Mammary epithelial cell (primary cell): ENCODE measurements at regions of chr2 and their contacts with region 1.

Region 1: DNA sequence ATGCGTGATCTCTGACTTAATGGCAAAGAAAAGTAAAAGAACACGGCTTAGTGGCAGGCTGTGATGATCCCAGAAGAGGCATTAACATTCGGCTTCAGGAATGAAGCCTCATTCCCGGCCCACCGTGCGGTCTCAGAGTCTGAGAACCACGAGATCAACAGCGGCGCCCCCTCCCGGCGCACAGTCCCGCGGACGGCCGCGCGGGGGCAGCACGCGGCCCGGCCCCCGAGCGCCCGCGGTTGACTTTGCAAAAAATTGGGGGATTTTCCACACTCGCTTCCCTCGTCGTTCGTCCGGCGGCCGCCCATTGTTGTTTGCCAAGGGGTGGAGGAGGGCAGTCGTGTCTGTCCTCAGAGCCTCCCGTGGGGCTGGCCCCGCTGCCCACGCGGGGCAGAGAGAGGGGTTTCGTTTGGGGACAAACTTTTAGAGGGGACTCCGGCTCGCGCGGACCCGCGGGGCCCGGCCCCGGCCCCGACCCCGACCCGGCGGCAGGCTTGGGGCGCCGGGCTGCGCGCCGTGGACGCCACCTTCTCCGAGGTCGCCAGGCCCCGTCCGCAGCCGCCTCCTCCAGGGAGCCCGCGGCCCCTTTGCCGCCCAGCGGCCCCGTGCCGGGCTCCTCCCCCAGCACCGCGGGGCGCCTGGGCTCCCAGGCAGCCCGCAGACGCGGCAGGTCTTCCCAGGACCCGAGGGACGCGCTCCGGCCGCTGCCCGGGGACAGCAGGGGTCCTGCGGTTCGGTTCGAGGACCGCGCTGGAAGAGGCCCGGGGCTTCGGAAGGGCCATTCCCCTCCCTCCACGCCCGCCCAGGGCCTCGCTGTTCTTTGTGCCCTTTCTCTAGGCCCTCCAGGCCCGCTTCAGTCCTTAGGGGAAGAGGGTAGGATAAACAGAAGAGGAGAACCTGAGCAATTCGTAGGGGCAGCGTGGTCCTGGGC is 3.4 kb upstream of the HS6ST1 start:
- DNase-seq: peak; percentile 67
- H3K4me3 ChIP-seq: peak overlapping the region; percentile 47 to 69 (median 50)
- H3K27ac ChIP-seq: peak overlapping the region; percentile 44
- H3K4me1 ChIP-seq: peaks cover 13% of the 10 kb centered on the region
- H3K27me3 ChIP-seq: no peaks in the 10 kb centered on the region
- CTCF ChIP-seq: peak; percentile 63 to 78

Region 2: GRCh38 chr2:128178650-128179460 is 143.2 kb before region 1 on chr2:
- CTCF ChIA-PET with region 1: no interaction called
- dilution Hi-C with region 1: no loop called
- in situ Hi-C with region 1: loop called in 1 of 2 experiments (anchors 25 kb)
- intact Hi-C with region 1: no loop called
- DNase-seq: peak; percentile 35
- H3K4me3 ChIP-seq: no peak overlapping the region
- H3K27ac ChIP-seq: no peak overlapping the region
- H3K4me1 ChIP-seq: no peaks in the 10 kb centered on the region
- H3K27me3 ChIP-seq: no peaks in the 10 kb centered on the region
- CTCF ChIP-seq: peak; percentile 86 to 91

Region 3: DNA sequence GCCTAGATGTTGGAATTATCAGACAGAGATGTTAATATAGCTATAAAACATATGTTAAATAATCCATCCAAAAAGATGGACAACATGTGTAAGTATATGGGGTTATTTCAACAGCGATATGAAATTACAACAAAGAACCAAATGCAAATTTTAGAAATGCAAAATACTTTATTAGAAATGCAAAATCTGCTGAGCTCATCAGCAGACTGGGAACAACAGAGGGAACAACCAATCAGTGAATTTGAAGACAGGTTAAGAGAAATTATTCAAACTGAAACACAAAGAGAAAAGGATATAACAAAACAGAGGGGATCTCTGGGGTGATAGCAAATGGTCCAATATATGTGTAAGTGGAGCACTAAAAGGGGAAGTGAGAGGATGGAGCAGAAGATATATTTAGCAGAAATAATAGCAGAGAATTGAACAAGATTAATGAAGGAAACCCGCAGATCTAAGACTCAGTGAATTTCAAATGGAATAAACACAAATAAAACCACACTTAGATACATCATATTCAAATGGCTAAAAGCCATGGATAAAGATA is 10.1 kb after region 1 on chr2:
- CTCF ChIA-PET with region 1: no interaction called
- dilution Hi-C with region 1: no loop called
- in situ Hi-C with region 1: no loop called
- intact Hi-C with region 1: no loop called
- DNase-seq: no peak
- H3K4me3 ChIP-seq: no peak overlapping the region
- H3K27ac ChIP-seq: no peak overlapping the region
- H3K4me1 ChIP-seq: no peaks in the 10 kb centered on the region
- H3K27me3 ChIP-seq: no peaks in the 10 kb centered on the region
- CTCF ChIP-seq: no peak

Region 4: DNA sequence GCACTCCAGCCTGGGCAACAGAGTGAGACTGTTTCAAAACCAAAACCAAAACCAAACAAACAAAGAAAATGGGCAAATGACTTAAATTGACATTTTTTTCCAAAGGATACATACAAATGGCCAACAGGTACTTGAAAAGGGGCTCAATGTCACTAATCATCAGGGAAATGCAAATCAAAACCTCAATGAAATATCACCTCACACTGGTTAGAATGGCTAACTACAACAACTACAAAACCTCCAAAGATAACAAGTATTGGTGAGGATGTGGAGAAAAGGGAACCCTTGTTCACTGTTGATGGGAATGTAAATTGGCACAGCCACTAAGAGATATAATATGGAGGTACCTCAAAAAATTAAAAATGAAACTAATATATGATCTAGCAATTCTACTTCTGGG is 209.8 kb after region 1 on chr2:
- CTCF ChIA-PET with region 1: no interaction called
- dilution Hi-C with region 1: no loop called
- in situ Hi-C with region 1: no loop called
- intact Hi-C with region 1: loop called (anchors 1 kb)
- DNase-seq: no peak
- H3K4me3 ChIP-seq: no peak overlapping the region
- H3K27ac ChIP-seq: no peak overlapping the region
- H3K4me1 ChIP-seq: no peaks in the 10 kb centered on the region
- H3K27me3 ChIP-seq: no peaks in the 10 kb centered on the region
- CTCF ChIP-seq: peak; percentile 27 to 41

Region 5: DNA sequence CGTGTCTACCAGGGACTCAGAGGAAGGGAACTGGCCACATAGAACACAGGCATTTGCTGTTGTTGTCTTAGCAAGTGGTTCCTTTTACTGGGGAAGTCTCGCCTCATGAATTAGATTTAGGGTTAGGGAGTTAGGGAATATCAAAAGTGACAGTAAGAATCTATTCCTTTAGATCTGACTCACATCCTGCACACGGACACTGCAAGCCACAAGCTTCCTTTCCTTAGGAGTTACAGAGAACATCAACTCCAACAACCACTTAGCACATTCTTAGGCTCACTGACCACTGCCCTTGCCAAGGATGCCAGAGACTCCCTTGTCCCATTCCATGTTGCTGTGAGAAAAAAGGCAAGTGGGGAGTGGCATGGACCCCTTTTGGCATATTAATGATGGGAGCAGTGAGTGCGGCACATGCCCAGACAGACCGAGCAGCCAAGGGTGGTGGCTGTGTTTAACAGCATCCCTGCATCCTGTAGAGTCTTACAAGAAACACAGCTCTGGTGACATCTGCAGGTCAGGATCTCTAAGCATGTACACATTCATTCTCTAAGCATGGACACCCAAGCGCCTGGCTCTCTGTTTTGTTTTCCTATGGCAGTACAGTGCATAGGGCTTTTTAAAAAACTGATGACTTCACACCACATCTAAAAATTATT is 911.8 kb after region 1 on chr2:
- CTCF ChIA-PET with region 1: no interaction called
- dilution Hi-C with region 1: no loop called
- in situ Hi-C with region 1: no loop called
- intact Hi-C with region 1: loop called (anchors 5 kb)
- DNase-seq: peak; percentile 42
- H3K4me3 ChIP-seq: no peak overlapping the region
- H3K27ac ChIP-seq: no peak overlapping the region
- H3K4me1 ChIP-seq: peaks cover 9% of the 10 kb centered on the region
- H3K27me3 ChIP-seq: no peaks in the 10 kb centered on the region
- CTCF ChIP-seq: peak in 1 of 2 donors; percentile 49

Region 6: DNA sequence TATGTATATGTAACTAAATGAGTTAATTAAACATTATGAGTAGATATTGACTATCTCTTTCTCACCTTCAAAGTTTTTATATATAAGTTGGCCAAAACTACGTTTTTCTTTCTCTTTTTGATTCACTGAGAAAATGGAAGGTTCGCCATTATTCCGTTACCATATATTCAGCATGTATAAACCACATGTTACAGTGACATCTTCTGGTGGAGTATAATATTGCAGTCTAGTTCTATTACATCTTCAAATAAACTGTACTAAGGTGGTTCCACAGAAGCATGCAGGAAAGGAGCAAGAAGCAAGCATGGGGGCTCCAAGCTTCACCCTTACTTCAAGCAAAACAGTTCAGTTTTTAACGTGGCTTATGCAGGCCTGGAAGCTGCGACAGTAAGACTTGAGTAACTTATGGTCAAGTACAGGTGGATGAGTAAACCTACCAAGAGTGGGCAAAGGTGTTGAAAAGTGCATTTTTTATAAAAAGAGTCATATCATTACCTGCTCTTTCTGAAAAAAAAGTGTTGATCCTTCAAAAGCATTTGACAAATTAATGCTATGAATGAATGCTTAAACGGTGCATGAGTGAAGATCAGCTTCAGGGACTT is 1527.6 kb after region 1 on chr2:
- CTCF ChIA-PET with region 1: no interaction called
- dilution Hi-C with region 1: no loop called
- in situ Hi-C with region 1: no loop called
- intact Hi-C with region 1: loop called (anchors 5 kb)
- DNase-seq: peak; percentile 50
- H3K4me3 ChIP-seq: no peak overlapping the region
- H3K27ac ChIP-seq: no peak overlapping the region
- H3K4me1 ChIP-seq: no peaks in the 10 kb centered on the region
- H3K27me3 ChIP-seq: no peaks in the 10 kb centered on the region
- CTCF ChIP-seq: peak; percentile 63 to 75